Transverse colon (tissue), 4 donors: ENCODE measurements at regions of chr12 and their contacts with region 1.

Region 1: DNA sequence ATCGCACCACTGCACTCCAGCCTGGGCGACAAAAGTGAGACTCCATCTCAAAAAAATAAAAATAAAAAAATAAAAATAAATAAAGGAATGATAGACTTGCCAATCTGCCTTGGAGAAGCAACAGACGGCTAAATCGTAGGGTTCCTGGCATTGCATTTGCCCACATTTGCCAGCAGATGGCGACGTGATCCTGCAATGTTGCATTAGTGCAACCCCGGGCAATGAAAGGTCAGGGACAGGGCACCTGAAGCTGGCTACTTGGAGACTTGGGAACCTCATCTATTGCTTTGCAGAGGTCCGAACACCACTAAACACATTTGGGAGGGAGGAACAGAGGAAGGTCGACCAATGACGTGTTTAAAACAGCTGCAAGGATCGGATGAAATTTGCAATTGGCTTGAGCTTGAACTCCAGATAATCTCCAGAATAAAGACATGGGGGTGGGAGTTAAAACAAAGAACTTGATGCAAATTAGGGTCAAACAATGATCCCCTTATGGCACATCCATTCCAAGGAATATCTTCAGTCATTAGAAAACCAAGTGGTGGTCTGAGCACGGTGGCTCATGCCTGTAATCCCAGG is 34.6 kb downstream of the SPRING1 start:
- DNase-seq: peak; percentile 71
- H3K4me3 ChIP-seq: no peak overlapping the region
- H3K27ac ChIP-seq: no peak overlapping the region
- H3K4me1 ChIP-seq: peaks cover 0 to 10% (median 7%) of the 10 kb centered on the region in 4 donors
- H3K27me3 ChIP-seq: no peaks in the 10 kb centered on the region
- CTCF ChIP-seq: peak; percentile 88 to 97 (median 91)
- EP300 ChIP-seq: no peak
- POLR2A ChIP-seq: no peak

Region 2: GRCh38 chr12:115998119-115998633 is 705.1 kb before region 1 on chr12:
- in situ Hi-C with region 1: loop called in 2 of 4 experiments (anchors 10 to 25 kb)
- intact Hi-C with region 1: no loop called
- DNase-seq: peak; percentile 14
- H3K4me3 ChIP-seq: no peak overlapping the region
- H3K27ac ChIP-seq: peak overlapping the region in 2 of 4 donors; percentile 12 to 26
- H3K4me1 ChIP-seq: peaks cover 0 to 17% (median 11%) of the 10 kb centered on the region in 4 donors
- H3K27me3 ChIP-seq: no peaks in the 10 kb centered on the region
- CTCF ChIP-seq: peak; percentile 77 to 85 (median 82)
- EP300 ChIP-seq: no peak
- POLR2A ChIP-seq: no peak

Region 3: DNA sequence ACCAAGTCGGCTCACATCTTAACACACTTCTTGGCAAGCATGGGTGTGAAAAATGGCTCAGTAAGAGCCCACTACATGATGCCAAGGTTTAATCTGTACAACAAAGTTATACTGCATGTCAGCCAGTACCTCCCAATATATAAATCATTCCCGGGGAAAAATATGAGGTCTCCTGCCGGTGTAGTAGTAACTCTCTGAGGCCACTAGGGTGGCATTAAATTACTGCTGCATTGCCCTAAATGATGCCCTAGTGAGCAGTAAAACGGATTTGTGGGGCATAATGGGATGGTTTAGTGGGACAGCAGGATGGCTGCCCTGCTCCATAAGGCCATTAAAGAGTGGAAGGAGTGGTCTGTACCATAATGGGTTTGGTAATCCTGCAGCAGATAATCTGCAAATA is 693.5 kb before region 1 on chr12:
- in situ Hi-C with region 1: loop called in 1 of 4 experiments (anchors 10 kb)
- intact Hi-C with region 1: no loop called
- DNase-seq: no peak
- H3K4me3 ChIP-seq: no peak overlapping the region
- H3K27ac ChIP-seq: no peak overlapping the region
- H3K4me1 ChIP-seq: no peaks in the 10 kb centered on the region
- H3K27me3 ChIP-seq: no peaks in the 10 kb centered on the region
- CTCF ChIP-seq: peak in 2 of 5 experiments; percentile 24 to 28
- EP300 ChIP-seq: no peak
- POLR2A ChIP-seq: no peak

Region 4: GRCh38 chr12:117119592-117120198 is 416.4 kb after region 1 on chr12:
- in situ Hi-C with region 1: loop called in 3 of 4 experiments (anchors 10 to 25 kb)
- intact Hi-C with region 1: no loop called
- DNase-seq: no peak
- H3K4me3 ChIP-seq: no peak overlapping the region
- H3K27ac ChIP-seq: no peak overlapping the region
- H3K4me1 ChIP-seq: no peaks in the 10 kb centered on the region
- H3K27me3 ChIP-seq: no peaks in the 10 kb centered on the region
- CTCF ChIP-seq: peak; percentile 59 to 67 (median 65)
- EP300 ChIP-seq: no peak
- POLR2A ChIP-seq: no peak

Region 5: DNA sequence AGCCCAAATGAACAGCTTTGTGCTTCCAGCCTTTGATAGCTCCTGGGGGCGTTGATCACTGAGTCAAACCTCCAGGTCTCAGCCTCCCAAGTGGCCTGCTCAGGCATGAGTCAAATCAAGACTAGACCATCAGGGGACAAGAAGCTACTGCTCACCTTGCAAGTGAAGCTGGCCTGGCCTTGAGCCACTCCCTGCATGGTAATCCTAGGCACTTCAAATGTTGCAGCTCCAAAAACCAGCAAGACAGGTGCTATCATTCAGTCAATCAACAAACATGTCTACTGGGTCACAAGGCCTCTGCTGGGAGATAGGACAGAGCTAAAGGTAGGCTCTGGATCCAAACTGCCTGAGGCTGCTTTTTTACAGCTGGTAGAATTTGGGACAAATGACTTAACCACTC is 691.2 kb after region 1 on chr12:
- in situ Hi-C with region 1: no loop called
- intact Hi-C with region 1: no loop called
- DNase-seq: no peak
- H3K4me3 ChIP-seq: no peak overlapping the region
- H3K27ac ChIP-seq: no peak overlapping the region
- H3K4me1 ChIP-seq: no peaks in the 10 kb centered on the region
- H3K27me3 ChIP-seq: no peaks in the 10 kb centered on the region
- CTCF ChIP-seq: no peak
- EP300 ChIP-seq: no peak
- POLR2A ChIP-seq: no peak